H1 (cell line): ENCODE measurements at regions of chr6 and their contacts with region 1.

Region 1: GRCh38 chr6:6221787-6222535 is 98.5 kb downstream of the F13A1 start:
- DNase-seq: peak in 1 of 2 experiments; percentile 78
- H3K4me3 ChIP-seq: no peak overlapping the region
- H3K27ac ChIP-seq: no peak overlapping the region
- H3K4me1 ChIP-seq: no peaks in the 10 kb centered on the region; a peak in 2 of 7 replicates
- H3K27me3 ChIP-seq: no peaks in the 10 kb centered on the region; a peak in 1 of 7 replicates
- CTCF ChIP-seq: peak; percentile 26 to 72 (median 72)
- EP300 ChIP-seq: no peak
- POLR2A ChIP-seq: no peak
- RAD21 ChIP-seq: peak; percentile 55 to 71

Region 2: GRCh38 chr6:6202886-6203285 is 19.1 kb before region 1 on chr6:
- CTCF ChIA-PET with region 1: interaction called, 15 read pairs
- POLR2A ChIA-PET with region 1: no interaction called
- DNase-seq: no peak
- H3K4me3 ChIP-seq: no peak overlapping the region
- H3K27ac ChIP-seq: no peak overlapping the region
- H3K4me1 ChIP-seq: no peaks in the 10 kb centered on the region
- H3K27me3 ChIP-seq: no peaks in the 10 kb centered on the region
- CTCF ChIP-seq: no peak
- EP300 ChIP-seq: no peak
- POLR2A ChIP-seq: no peak
- RAD21 ChIP-seq: no peak

Region 3: GRCh38 chr6:6239598-6240581 is 17.9 kb after region 1 on chr6:
- CTCF ChIA-PET with region 1: interaction called, 13 read pairs
- POLR2A ChIA-PET with region 1: no interaction called
- DNase-seq: no peak
- H3K4me3 ChIP-seq: no peak overlapping the region
- H3K27ac ChIP-seq: no peak overlapping the region
- H3K4me1 ChIP-seq: no peaks in the 10 kb centered on the region
- H3K27me3 ChIP-seq: peaks cover 0 to 1% (median 0%) of the 10 kb centered on the region in 4 experiments; a peak in 1 of 7 replicates
- CTCF ChIP-seq: no peak
- EP300 ChIP-seq: no peak
- POLR2A ChIP-seq: no peak
- RAD21 ChIP-seq: no peak

Region 4: DNA sequence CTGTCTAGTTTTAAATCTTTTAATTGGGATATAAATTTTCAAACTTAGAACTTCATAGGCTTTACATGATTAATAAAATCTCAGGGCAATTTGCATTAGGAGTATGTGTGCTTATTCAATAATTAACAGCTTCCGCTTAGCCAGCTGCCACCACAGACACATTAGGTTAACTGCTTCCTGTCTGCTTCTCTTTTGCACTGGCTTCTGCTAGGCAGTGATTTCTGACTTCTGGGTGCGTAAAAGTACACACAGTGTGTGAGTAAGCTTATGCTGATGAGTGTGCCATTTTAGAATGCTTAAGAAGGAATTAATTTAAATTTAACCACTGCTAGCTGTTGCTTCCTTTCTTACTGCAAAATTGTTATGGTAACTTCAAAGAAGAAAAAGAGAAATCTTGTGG is 24.6 kb after region 1 on chr6:
- CTCF ChIA-PET with region 1: interaction called, 12 read pairs
- POLR2A ChIA-PET with region 1: no interaction called
- DNase-seq: no peak
- H3K4me3 ChIP-seq: no peak overlapping the region
- H3K27ac ChIP-seq: no peak overlapping the region
- H3K4me1 ChIP-seq: no peaks in the 10 kb centered on the region
- H3K27me3 ChIP-seq: no peaks in the 10 kb centered on the region
- CTCF ChIP-seq: no peak
- EP300 ChIP-seq: no peak
- POLR2A ChIP-seq: no peak
- RAD21 ChIP-seq: no peak